Prostate gland (tissue), 2 donors: ENCODE measurements at regions of chrX and their contacts with region 1.

Region 1: DNA sequence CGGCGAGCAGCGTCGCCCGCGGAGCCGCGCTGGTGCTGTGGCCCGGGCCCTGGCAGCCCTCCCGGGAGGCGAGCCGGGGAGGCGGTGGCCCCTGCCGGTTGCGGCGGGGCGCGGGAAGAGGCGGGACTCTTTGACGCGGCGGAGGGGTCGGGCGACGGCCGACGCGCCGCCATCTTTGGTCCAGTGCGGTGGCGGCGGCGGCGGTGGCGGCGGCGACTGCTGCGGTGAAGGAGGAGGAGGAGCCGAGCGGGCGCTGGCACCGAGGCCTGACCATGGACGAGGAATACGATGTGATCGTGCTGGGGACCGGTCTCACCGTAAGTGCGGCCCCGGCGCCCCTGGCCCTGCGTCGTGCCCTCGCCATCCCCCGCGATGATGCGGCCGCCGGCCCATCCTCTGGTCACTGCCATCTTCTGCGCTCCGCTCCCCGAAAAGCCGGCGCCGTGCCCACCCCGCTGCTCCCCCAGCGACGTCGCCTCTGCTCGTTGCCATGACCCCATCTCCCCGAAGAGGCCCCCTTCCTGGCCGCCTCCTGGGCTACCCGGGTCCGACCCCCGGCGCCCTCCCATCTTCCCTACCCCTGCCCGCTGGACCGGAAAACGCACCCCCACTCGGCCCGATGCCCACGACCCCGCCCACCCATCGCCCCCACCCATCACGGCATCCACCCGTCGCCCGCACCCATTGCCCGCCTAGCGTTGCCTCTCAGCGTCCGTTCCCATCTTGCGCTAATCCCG is at the start of gene GDI1:
- DNase-seq: no peak
- H3K4me3 ChIP-seq: peak within 1 kb of the TSS; percentile 55 to 61
- H3K27ac ChIP-seq: peak within 1 kb of the TSS; percentile 79 to 87
- H3K4me1 ChIP-seq: no peaks in the 10 kb centered on the region
- H3K27me3 ChIP-seq: no peaks in the 10 kb centered on the region
- CTCF ChIP-seq: no peak
- POLR2A ChIP-seq: peak; percentile 56
- total RNA-seq, gene GDI1: 52.9 to 148 TPM

Region 2: GRCh38 chrX:154097597-154098541 is 339.3 kb before region 1 on chrX and contains the start of gene MECP2:
- intact Hi-C with region 1: no loop called
- DNase-seq: peak; percentile 89
- H3K4me3 ChIP-seq: peak within 1 kb of the TSS; percentile 62 to 68
- H3K27ac ChIP-seq: peak within 1 kb of the TSS; percentile 96 to 97
- H3K4me1 ChIP-seq: no peaks in the 10 kb centered on the region
- H3K27me3 ChIP-seq: no peaks in the 10 kb centered on the region
- CTCF ChIP-seq: peak in 2 of 4 experiments; percentile 4 to 15
- POLR2A ChIP-seq: no peak
- total RNA-seq, gene MECP2: 54.4 to 85.2 TPM

Region 3: GRCh38 chrX:154397819-154398724 is 39.1 kb before region 1 on chrX and contains the start of gene RPL10:
- intact Hi-C with region 1: loop called (anchors 5 kb)
- DNase-seq: peak; percentile 92
- H3K4me3 ChIP-seq: peak within 1 kb of the TSS; percentile 56 to 62
- H3K27ac ChIP-seq: peak within 1 kb of the TSS; percentile 95 to 96
- H3K4me1 ChIP-seq: no peaks in the 10 kb centered on the region
- H3K27me3 ChIP-seq: no peaks in the 10 kb centered on the region
- CTCF ChIP-seq: peak in 1 of 4 experiments; percentile 25
- POLR2A ChIP-seq: peak; percentile 81
- total RNA-seq, gene RPL10: 3,702 to 5,500 TPM

Region 4: DNA sequence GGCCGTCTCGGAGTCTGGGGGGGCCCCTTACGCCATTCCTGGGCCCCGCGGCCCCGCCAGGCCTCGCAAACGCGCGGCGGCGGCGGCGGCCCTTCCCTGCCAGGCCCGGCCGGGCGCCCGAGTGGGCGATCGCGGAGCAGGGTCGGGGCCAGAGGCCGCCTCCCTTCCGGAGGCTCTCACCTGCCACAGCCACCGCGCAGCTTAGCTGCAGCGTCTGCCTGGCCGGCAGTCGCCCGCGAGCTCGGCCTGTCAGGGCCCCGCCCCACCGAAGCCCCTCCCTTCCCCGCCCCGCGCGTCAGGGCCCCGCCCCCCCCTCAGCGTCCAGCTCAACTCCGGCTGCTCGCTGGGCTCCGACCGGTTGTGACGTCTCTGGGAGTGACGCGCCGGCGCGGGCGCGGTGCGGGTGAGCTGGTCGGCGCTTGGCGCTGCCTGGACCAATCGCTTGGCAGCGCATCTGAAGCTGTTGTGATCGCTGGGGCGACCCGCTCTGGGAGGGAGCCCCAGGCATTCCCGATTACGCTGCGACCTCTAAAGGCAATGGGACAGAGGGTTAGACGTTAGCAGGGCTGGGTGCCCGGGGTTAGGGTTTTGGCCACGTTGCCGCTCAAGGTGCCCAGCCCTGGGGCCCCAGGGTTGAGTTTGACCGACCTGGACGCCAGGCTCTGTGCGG is 53.4 kb after region 1 on chrX and contains the start of gene SLC10A3:
- intact Hi-C with region 1: loop called (anchors 5 kb)
- DNase-seq: peak; percentile 91
- H3K4me3 ChIP-seq: peak within 1 kb of the TSS; percentile 47 to 57
- H3K27ac ChIP-seq: peak within 1 kb of the TSS; percentile 93 to 94
- H3K4me1 ChIP-seq: no peaks in the 10 kb centered on the region
- H3K27me3 ChIP-seq: no peaks in the 10 kb centered on the region
- CTCF ChIP-seq: peak in 1 of 4 experiments; percentile 21
- POLR2A ChIP-seq: peak; percentile 86
- total RNA-seq, gene SLC10A3: 28.0 to 45.6 TPM